Activated CD4-positive, alpha-beta T cell treated with anti-CD3 and anti-CD28 coated beads, Interleukin-2, amount 10 ng/mL, durations not matched to agents 24 days and 14 days (primary cell): ENCODE measurements at regions of chr14 and their contacts with region 1.

Region 1: DNA sequence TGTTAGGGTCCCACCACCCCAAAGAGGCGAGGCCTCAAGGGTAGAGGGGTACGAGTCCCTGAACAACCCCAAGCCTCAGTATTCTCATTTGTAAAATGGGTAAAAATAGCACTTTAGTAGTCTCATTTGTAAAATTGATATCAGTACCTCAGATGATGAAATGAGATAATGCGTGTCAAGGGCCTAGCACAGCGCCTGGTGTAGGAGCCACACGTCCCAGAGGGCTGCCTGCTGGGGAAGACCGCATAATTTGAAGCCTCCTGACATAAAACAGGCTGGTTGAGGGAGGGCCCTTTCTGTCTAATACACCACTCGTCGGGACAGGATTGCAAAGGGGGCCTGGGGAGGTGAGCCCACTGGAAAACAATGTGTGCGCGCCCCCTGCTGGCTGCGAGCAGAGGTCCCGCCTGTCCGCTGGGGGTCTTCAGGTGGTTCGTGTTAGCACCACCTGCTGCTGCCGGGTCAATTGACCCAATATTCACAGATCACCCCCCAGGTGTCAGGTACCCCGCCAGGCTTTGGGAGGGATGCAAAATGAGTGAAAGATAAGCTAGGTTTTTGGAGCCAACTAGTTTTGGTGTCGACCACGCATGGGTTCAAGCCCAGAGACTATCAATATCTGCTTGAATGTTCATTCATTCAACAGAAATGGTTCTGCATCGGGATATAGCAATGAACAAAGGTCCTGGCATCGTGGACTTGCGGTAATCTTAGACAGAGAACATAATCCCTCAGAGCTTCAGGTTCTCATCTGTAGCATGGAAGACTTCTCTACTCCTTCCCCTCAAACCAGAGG is 24.7 kb upstream of the IRF2BPL start:
- DNase-seq: peak; percentile 91
- H3K4me3 Mint-ChIP-seq: no peak overlapping the region
- H3K27ac Mint-ChIP-seq: no peak overlapping the region
- H3K4me1 Mint-ChIP-seq: peaks cover 7% of the 10 kb centered on the region
- H3K27me3 Mint-ChIP-seq: no peaks in the 10 kb centered on the region

Region 2: GRCh38 chr14:76876076-76876475 is 177.2 kb before region 1 on chr14:
- intact Hi-C with region 1: loop called (anchors 1 kb)
- DNase-seq: peak; percentile 82
- H3K4me3 Mint-ChIP-seq: no peak overlapping the region
- H3K27ac Mint-ChIP-seq: no peak overlapping the region
- H3K4me1 Mint-ChIP-seq: peaks cover 2% of the 10 kb centered on the region
- H3K27me3 Mint-ChIP-seq: peaks cover 3% of the 10 kb centered on the region

Region 3: GRCh38 chr14:76947078-76947837 is 106.0 kb before region 1 on chr14:
- intact Hi-C with region 1: loop called (anchors 1 kb)
- DNase-seq: peak; percentile 92
- H3K4me3 Mint-ChIP-seq: peak overlapping the region; percentile 41
- H3K27ac Mint-ChIP-seq: peak overlapping the region; percentile 84
- H3K4me1 Mint-ChIP-seq: peaks cover 44% of the 10 kb centered on the region
- H3K27me3 Mint-ChIP-seq: no peaks in the 10 kb centered on the region

Region 4: DNA sequence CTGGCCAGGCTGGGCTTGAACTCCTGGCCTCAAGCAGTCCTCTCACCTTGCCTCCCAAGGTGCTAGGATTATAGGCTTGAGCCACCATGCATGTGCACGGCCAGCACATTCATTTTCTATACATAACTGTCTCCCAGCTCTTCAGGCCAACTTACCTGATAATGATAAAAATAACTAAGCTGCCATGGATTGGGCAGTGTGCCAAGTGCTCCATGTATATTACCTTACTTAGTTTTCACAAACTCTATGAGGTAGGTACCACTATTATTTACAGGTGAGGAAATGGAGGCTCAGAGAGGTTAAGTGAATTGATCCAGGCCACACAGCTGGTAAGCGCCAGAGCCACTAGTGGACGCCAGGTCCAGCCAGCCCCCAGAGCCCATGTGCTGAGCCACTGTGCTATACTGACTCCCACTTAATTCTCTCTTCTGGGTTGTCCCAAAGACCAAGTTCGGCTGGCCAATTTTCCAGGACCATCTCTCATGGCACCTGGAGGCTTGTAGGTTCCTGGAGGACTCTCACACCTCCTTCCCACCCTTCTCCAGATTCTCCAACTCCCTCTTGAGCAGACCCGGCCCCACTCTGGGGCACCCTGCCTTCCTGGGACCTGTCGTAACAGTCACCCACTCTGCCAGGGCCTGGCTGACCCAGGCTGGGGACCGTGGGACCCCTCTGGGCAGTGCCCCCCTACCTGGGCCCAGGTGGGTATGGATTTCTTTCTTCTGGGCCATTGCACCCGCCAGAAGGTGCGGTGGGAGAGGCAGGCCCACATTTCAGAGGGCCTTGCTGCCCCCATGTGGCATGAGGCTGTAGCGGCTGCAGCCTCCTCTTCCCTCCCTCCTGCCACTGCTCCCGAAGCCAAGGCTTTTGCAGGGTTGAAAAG is 14.6 kb after region 1 on chr14:
- intact Hi-C with region 1: no loop called
- DNase-seq: peak; percentile 88
- H3K4me3 Mint-ChIP-seq: no peak overlapping the region
- H3K27ac Mint-ChIP-seq: no peak overlapping the region
- H3K4me1 Mint-ChIP-seq: peaks cover 3% of the 10 kb centered on the region
- H3K27me3 Mint-ChIP-seq: peaks cover 11% of the 10 kb centered on the region

Region 5: DNA sequence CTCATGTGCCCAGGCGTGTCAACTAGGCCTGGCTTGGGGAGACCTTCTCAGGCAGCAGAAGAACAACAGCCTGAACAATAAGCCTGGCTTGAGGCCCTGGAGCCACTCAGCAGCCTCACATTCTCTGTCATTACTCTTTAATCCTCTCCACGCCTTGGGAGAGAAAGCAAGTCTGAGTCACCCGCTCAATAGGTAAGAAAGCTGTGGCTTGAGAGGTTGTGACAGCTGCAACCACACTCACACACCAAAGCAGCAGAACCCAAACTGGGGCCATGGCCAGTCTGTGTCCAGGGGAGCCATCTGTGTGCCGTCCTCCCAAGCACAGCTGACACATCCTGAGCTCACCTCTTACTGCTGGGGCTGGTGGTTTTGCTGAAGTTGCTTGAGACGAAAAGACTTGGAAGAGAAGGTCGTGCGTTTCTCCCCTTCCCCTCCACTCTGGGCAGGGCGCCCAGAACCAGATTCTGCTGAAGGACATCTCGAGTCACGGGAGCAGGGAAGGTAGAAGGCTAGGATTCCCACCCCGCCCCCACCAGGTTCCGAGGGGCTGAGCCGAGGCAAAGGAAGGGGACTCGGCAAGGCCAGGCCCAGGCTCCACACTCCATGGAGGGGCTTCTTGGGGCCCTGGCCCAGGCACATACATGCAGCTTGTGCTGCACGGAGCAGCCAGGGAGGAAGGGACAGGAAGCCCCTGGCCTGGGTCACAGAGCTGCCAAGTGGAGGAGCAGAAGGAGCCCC is 133.8 kb after region 1 on chr14:
- intact Hi-C with region 1: no loop called
- DNase-seq: no peak
- H3K4me3 Mint-ChIP-seq: no peak overlapping the region
- H3K27ac Mint-ChIP-seq: no peak overlapping the region
- H3K4me1 Mint-ChIP-seq: peaks cover 13% of the 10 kb centered on the region
- H3K27me3 Mint-ChIP-seq: peaks cover 20% of the 10 kb centered on the region

Region 6: GRCh38 chr14:77625360-77625759 is 572.1 kb after region 1 on chr14:
- intact Hi-C with region 1: no loop called
- DNase-seq: no peak
- H3K4me3 Mint-ChIP-seq: no peak overlapping the region
- H3K27ac Mint-ChIP-seq: no peak overlapping the region
- H3K4me1 Mint-ChIP-seq: peaks cover 3% of the 10 kb centered on the region
- H3K27me3 Mint-ChIP-seq: peaks cover 4% of the 10 kb centered on the region